ENCODE measurements at regions of chr5 and their contacts with region 1.

Region 1: DNA sequence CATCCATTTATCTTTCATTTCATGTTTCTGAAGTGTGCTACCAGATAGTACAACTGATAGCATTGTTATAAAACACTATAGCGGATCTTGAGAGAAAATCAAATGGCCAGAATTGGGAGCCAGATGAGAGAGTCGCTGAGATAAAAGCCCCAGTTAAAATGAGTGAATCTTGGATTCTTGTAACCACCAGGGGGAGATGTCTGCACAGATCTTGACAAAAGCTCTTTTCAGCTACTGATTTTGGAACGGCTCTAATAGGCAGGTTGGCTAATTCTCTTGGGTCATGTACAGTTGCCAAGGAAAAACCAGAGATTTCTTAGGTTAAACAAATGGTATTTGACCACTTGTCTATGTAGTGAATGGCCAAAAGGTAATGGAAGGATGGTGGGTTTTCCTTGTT is 21.7 kb downstream of the F2RL2 start:
- DNase-seq: no peak
- H3K4me3 ChIP-seq: no peak overlapping the region
- H3K27ac ChIP-seq: no peak overlapping the region
- H3K4me1 ChIP-seq: no peaks in the 10 kb centered on the region
- H3K27me3 ChIP-seq: no peaks in the 10 kb centered on the region
- CTCF ChIP-seq: peak; percentile 50 to 62 (median 53)

Region 2: DNA sequence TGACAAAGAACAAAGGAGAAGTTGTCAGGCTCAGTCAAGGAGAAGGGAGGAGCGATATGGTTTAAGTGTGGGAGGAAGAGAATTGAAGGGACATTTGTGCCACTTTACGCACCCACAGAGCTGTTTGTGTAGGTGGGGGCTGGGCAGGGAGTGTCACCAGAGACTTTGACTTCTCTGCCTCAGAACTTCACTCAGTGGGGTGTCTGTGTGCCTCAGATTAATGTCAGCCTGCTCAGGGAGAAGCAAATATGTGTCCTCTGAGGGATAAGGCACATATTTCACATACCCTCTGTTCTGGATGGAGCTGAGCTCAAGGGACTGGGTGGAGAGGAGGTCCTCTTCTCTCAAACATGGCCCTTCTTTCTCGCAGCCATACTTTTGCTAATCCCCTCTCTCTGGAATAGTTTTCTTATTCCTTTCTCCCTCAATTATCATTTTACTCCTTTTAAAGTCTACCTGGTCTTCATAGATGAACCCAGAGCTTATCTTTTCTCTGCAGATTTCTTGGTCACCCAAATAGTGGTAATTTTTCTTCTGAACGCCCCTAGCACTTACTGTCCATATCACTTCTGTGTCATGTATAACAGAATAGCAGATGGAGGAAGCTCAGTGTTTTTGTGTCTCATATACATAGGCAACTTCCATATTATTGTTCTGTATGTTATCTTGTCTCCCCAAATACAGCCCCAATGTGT is 121.3 kb before region 1 on chr5:
- intact Hi-C with region 1: no loop called
- DNase-seq: no peak
- H3K4me3 ChIP-seq: no peak overlapping the region
- H3K27ac ChIP-seq: no peak overlapping the region
- H3K4me1 ChIP-seq: no peaks in the 10 kb centered on the region
- H3K27me3 ChIP-seq: no peaks in the 10 kb centered on the region
- CTCF ChIP-seq: no peak

Region 3: DNA sequence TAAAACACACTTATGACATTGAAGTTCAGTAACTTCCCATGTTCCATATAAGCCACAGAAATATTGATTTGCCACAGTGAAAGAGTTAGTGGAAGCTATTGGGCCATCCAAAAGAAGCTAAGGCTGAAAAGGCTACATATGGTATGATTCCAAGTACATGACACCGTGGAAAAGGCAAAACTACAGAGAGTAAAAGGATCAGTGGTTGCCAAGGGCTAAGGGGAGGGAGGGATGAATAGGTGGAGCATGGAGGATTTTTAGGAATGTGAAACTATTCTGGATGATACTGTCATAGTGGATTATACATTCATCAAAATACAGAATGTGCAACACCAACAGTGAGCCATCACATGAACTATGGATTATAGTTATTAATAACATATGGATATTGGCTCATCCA is 88.0 kb before region 1 on chr5:
- intact Hi-C with region 1: no loop called
- DNase-seq: no peak
- H3K4me3 ChIP-seq: no peak overlapping the region
- H3K27ac ChIP-seq: no peak overlapping the region
- H3K4me1 ChIP-seq: no peaks in the 10 kb centered on the region
- H3K27me3 ChIP-seq: no peaks in the 10 kb centered on the region
- CTCF ChIP-seq: no peak

Region 4: DNA sequence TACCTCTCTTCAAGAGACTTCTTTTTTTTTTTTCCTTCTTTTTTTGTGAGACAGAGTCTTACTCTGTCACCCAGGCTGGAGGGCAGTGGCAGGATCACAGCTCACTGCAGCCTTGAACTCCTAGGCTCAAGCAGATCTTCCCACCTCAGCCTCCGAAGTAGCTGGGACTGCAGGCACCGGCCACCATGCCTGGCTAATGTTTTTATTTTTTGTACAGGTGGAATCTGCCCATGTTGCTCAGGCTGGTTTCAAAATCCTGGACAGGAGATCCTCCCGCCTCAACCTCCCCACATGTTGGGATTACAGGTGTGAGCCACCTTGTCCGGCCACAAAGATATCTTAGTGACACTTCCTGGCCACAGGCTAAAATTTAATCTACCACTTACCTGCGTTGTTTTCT is 174.5 kb after region 1 on chr5:
- intact Hi-C with region 1: loop called (anchors 2 kb)
- DNase-seq: no peak
- H3K4me3 ChIP-seq: no peak overlapping the region
- H3K27ac ChIP-seq: no peak overlapping the region
- H3K4me1 ChIP-seq: no peaks in the 10 kb centered on the region
- H3K27me3 ChIP-seq: no peaks in the 10 kb centered on the region
- CTCF ChIP-seq: no peak

Region 5: GRCh38 chr5:77015938-77016569 is 414.6 kb after region 1 on chr5:
- intact Hi-C with region 1: loop called (anchors 1 kb)
- DNase-seq: no peak
- H3K4me3 ChIP-seq: no peak overlapping the region
- H3K27ac ChIP-seq: no peak overlapping the region
- H3K4me1 ChIP-seq: no peaks in the 10 kb centered on the region
- H3K27me3 ChIP-seq: no peaks in the 10 kb centered on the region
- CTCF ChIP-seq: peak in 1 of 3 experiments; percentile 24

Measured in ascending aorta (tissue), 2 donors.